ENCODE measurements at regions of chr19 and their contacts with region 1.

Region 1: GRCh38 chr19:44051654-44052402 is at the start of gene ZNF223:
- DNase-seq: peak; percentile 97
- H3K4me3 ChIP-seq: peak within 1 kb of the TSS; percentile 54 to 63 (median 56)
- H3K27ac ChIP-seq: peak within 1 kb of the TSS; percentile 41
- H3K4me1 ChIP-seq: peaks cover 9% of the 10 kb centered on the region
- H3K27me3 ChIP-seq: no peaks in the 10 kb centered on the region
- CTCF ChIP-seq: no peak
- total RNA-seq, gene ZNF223: 4.6 to 6.3 TPM

Region 2: GRCh38 chr19:43983912-43984686 is 67.7 kb before region 1 on chr19 and contains the start of gene ZNF155:
- CTCF ChIA-PET with region 1: no interaction called
- dilution Hi-C with region 1: no loop called
- in situ Hi-C with region 1: no loop called
- intact Hi-C with region 1: loop called (anchors 1 kb)
- DNase-seq: peak; percentile 95
- H3K4me3 ChIP-seq: peak within 1 kb of the TSS; percentile 41 to 59 (median 47)
- H3K27ac ChIP-seq: no peak within 1 kb of the TSS
- H3K4me1 ChIP-seq: no peaks in the 10 kb centered on the region
- H3K27me3 ChIP-seq: no peaks in the 10 kb centered on the region
- CTCF ChIP-seq: no peak
- total RNA-seq, gene ZNF155: 8.4 to 10.0 TPM

Region 3: GRCh38 chr19:44025217-44025936 is 26.5 kb before region 1 on chr19 and contains the start of gene ZNF222:
- CTCF ChIA-PET with region 1: no interaction called
- dilution Hi-C with region 1: no loop called
- in situ Hi-C with region 1: no loop called
- intact Hi-C with region 1: loop called (anchors 1 kb)
- DNase-seq: peak; percentile 84
- H3K4me3 ChIP-seq: peak within 1 kb of the TSS; percentile 59 to 76 (median 74)
- H3K27ac ChIP-seq: peak within 1 kb of the TSS; percentile 30
- H3K4me1 ChIP-seq: no peaks in the 10 kb centered on the region
- H3K27me3 ChIP-seq: no peaks in the 10 kb centered on the region
- CTCF ChIP-seq: no peak
- total RNA-seq, gene ZNF222: 3.9 to 5.3 TPM

Region 4: DNA sequence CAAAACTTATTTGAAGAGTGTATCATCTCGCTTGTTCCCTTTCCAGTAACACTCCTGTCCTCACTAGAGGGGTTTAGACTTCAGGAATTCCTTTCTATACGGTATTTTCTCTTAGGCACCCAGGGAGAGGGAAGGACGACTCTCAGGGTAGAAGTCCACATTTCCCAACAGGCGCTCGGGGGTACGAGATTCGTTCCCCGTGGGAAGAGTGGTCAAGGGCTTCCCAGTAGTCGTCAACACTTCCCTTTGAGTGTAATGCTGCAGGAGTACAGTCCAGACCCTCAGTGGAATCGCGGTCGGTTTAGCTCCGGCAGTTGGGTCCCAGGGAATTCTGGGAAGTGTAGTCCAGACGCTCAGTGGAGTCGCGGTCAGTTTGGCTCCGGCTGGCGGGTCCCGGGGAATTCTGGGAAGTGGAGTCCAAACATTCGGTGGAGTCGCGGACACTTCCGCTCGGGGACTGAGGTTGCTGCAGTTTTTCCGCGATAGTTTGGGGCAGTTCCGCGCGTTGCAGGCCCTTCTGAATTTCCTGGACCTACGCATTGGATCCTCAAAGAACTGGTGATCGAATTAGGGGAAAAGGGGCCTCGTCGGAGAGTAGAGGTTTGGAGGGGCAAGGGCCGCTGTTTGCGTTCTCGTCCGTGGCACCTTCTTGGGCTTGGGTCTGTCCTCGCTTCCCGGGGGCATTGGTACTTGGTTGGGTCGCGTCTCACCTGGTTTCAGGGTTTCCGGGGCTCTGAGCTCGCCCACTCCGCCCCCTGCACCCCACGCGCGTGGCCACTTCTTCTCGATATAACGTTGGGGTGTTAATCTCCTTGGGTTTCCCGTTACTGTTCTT is 42.3 kb after region 1 on chr19 and contains the start of gene ZNF224:
- CTCF ChIA-PET with region 1: no interaction called
- dilution Hi-C with region 1: no loop called
- in situ Hi-C with region 1: no loop called
- intact Hi-C with region 1: loop called (anchors 1 kb)
- DNase-seq: peak; percentile 89
- H3K4me3 ChIP-seq: peak within 1 kb of the TSS; percentile 82 to 93 (median 89)
- H3K27ac ChIP-seq: peak within 1 kb of the TSS; percentile 49
- H3K4me1 ChIP-seq: no peaks in the 10 kb centered on the region
- H3K27me3 ChIP-seq: no peaks in the 10 kb centered on the region
- CTCF ChIP-seq: no peak
- total RNA-seq, gene ZNF224: 15.3 to 24.0 TPM

Region 5: GRCh38 chr19:44356383-44357111 is 304.7 kb after region 1 on chr19 and contains the start of gene ZNF112:
- CTCF ChIA-PET with region 1: no interaction called
- dilution Hi-C with region 1: no loop called
- in situ Hi-C with region 1: no loop called
- intact Hi-C with region 1: loop called (anchors 5 kb)
- DNase-seq: peak; percentile 97
- H3K4me3 ChIP-seq: peak within 1 kb of the TSS; percentile 66 to 86 (median 69)
- H3K27ac ChIP-seq: peak within 1 kb of the TSS; percentile 37
- H3K4me1 ChIP-seq: peaks cover 2% of the 10 kb centered on the region
- H3K27me3 ChIP-seq: no peaks in the 10 kb centered on the region
- CTCF ChIP-seq: no peak
- total RNA-seq, gene ZNF112: 4.7 to 6.5 TPM

Measured in mammary epithelial cell (primary cell).